ENCODE measurements at regions of chr18 and their contacts with region 1.

Region 1: GRCh38 chr18:70421471-70422390 is 132.9 kb downstream of the SOCS6 start:
- DNase-seq: peak; percentile 69 to 79
- ATAC-seq: peak; percentile 72 to 96 (median 94)
- H3K4me3 ChIP-seq: no peak overlapping the region
- H3K27ac ChIP-seq: peak overlapping the region in 5 of 10 donors; percentile 26 to 80 (median 36)
- H3K4me1 ChIP-seq: peaks cover 0 to 53% (median 38%) of the 10 kb centered on the region in 9 donors
- H3K27me3 ChIP-seq: no peaks in the 10 kb centered on the region
- CTCF ChIP-seq: no peak

Region 2: GRCh38 chr18:70205421-70206397 is 216.0 kb before region 1 on chr18 and contains the start of gene RTTN:
- intact Hi-C with region 1: loop called in 1 of 10 experiments (anchors 2 kb)
- DNase-seq: peak; percentile 94 to 95
- ATAC-seq: peak; percentile 100
- H3K4me3 ChIP-seq: peak within 1 kb of the TSS; percentile 32 to 89 (median 74)
- H3K27ac ChIP-seq: peak within 1 kb of the TSS; percentile 91 to 99 (median 97)
- H3K4me1 ChIP-seq: peaks cover 0 to 22% (median 16%) of the 10 kb centered on the region in 9 donors
- H3K27me3 ChIP-seq: peaks cover 0 to 2% (median 0%) of the 10 kb centered on the region in 7 donors
- CTCF ChIP-seq: no peak
- total RNA-seq, gene RTTN: 6.5 to 15.7 (median 10.2) TPM

Region 3: GRCh38 chr18:70288851-70289328 is 132.8 kb before region 1 on chr18 and contains the start of gene SOCS6:
- intact Hi-C with region 1: loop called in 5 of 10 experiments (anchors 5 to 10 kb)
- DNase-seq: peak; percentile 59 to 77
- ATAC-seq: peak; percentile 30 to 82 (median 64)
- H3K4me3 ChIP-seq: peak within 1 kb of the TSS; percentile 57 to 95 (median 73)
- H3K27ac ChIP-seq: peak within 1 kb of the TSS; percentile 82 to 94 (median 90)
- H3K4me1 ChIP-seq: peaks cover 5 to 68% (median 39%) of the 10 kb centered on the region in 9 donors
- H3K27me3 ChIP-seq: no peaks in the 10 kb centered on the region
- CTCF ChIP-seq: no peak
- total RNA-seq, gene SOCS6: 17.0 to 31.8 (median 21.2) TPM

Region 4: DNA sequence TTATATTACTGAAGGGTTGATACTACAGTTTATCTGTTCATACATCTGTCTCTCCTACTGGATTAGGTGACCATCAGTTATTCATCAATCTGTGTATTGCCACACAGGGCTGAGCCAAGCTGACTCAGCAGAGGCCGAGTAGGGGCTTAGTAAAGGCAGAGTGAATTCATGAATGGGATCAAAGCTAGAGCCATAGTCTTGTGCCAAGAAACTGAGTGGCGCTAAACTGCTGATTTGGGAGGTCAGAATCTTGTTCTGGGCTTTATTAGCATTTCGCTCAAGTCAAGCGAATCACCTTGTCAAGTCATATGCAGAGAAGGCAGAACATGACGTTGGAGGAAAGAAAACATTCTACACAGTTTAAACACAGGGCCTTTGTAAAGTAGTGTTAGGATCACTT is 98.8 kb before region 1 on chr18:
- intact Hi-C with region 1: no loop called
- DNase-seq: no peak
- ATAC-seq: peak in 3 of 8 donors; percentile 27 to 55 (median 52)
- H3K4me3 ChIP-seq: no peak overlapping the region
- H3K27ac ChIP-seq: no peak overlapping the region
- H3K4me1 ChIP-seq: peaks cover 0 to 15% (median 0%) of the 10 kb centered on the region in 9 donors
- H3K27me3 ChIP-seq: no peaks in the 10 kb centered on the region
- CTCF ChIP-seq: no peak

Region 5: GRCh38 chr18:70337139-70337972 is 84.4 kb before region 1 on chr18:
- intact Hi-C with region 1: loop called in 1 of 10 experiments (anchors 10 kb)
- DNase-seq: peak in 1 of 2 donors; percentile 49
- ATAC-seq: peak; percentile 83 to 96 (median 90)
- H3K4me3 ChIP-seq: peak overlapping the region in 2 of 10 donors; percentile 4 to 12
- H3K27ac ChIP-seq: peak overlapping the region in 8 of 10 donors; percentile 7 to 85 (median 60)
- H3K4me1 ChIP-seq: peaks cover 0 to 29% (median 0%) of the 10 kb centered on the region in 9 donors
- H3K27me3 ChIP-seq: no peaks in the 10 kb centered on the region
- CTCF ChIP-seq: no peak

Region 6: DNA sequence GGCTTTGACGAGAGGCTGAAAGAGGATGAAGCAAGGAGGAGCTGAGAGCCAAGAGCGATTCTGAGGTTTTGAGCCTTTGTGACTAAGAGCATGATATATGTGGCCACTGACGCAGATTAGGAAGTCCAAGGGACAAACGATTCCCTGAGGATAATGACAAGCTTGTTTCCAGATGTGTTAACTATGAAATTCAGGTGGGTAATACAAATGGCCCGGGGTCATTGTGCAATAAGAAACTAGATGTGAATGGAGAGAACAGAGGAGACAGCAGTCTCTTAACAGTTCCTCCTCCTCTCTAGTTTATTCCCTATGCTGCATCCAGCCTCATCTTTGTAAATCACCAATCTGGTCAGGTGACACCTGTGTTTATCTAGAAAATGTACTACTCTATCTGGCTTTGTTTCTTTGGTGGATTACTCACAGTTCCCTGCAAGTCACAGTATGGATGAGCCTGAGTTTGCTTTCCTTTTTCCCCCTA is 48.6 kb before region 1 on chr18:
- intact Hi-C with region 1: loop called in 1 of 10 experiments (anchors 10 kb)
- DNase-seq: no peak
- ATAC-seq: no peak
- H3K4me3 ChIP-seq: no peak overlapping the region
- H3K27ac ChIP-seq: no peak overlapping the region
- H3K4me1 ChIP-seq: no peaks in the 10 kb centered on the region
- H3K27me3 ChIP-seq: no peaks in the 10 kb centered on the region
- CTCF ChIP-seq: no peak

Measured in heart right ventricle (tissue), 16 donors.